ENCODE measurements at regions of chr10 and their contacts with region 1.

Region 1: GRCh38 chr10:70355051-70356021 is 27.1 kb downstream of the LRRC20 start:
- DNase-seq: no peak
- ATAC-seq: no peak
- H3K4me3 ChIP-seq: no peak overlapping the region
- H3K27ac ChIP-seq: peak overlapping the region; percentile 90
- H3K4me1 ChIP-seq: peaks cover 84% of the 10 kb centered on the region
- H3K27me3 ChIP-seq: no peaks in the 10 kb centered on the region
- CTCF ChIP-seq: no peak
- EP300 ChIP-seq: no peak
- POLR2A ChIP-seq: no peak
- RAD21 ChIP-seq: no peak

Region 2: GRCh38 chr10:70197235-70197945 is 157.9 kb before region 1 on chr10:
- CTCF ChIA-PET with region 1: no interaction called
- POLR2A ChIA-PET with region 1: no interaction called
- in situ Hi-C with region 1: no loop called
- intact Hi-C with region 1: no loop called
- DNase-seq: no peak
- ATAC-seq: no peak
- H3K4me3 ChIP-seq: no peak overlapping the region
- H3K27ac ChIP-seq: no peak overlapping the region
- H3K4me1 ChIP-seq: peaks cover 9% of the 10 kb centered on the region
- H3K27me3 ChIP-seq: no peaks in the 10 kb centered on the region
- CTCF ChIP-seq: no peak
- EP300 ChIP-seq: no peak
- POLR2A ChIP-seq: no peak
- RAD21 ChIP-seq: no peak

Region 3: DNA sequence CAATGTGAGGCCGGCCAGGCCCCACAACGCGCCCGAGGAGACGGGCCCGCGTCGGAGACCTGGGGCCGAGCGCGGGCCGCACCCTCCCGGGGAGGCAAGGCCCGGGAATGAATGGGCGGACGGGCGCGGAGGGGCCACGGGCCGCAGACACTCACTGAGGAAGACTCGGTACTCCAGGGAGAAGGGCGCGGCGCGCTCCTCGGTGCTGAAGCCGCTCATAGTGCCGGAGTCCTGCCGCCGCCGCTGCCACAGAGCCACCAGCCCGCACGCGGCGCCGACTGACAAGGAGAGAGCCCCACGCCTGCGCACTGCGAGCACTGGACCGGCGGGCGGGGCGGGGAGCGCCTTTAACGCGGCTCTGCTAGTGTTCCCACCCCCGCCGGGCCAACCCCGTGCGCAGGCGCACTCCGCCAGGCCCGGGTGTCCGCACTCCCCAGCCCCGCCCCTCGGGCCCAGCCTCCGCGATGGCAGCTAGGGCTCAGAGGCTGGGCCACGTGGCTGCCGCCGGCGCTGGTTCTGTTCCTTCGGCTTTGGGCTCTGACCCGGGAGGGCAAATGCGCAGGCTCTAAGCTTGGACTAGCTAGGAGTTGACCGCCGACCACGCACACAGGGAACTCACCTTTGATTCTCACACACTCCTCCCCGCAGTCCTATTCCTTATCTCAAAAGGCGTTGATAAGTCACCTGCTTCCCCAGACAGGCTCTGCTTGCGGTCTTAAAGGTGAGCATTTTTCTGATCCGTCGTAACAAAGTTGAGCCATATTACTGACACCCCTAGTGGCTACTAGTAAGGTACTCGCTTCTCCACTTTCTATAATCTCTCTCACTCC is 122.0 kb before region 1 on chr10 and contains the start of gene PPA1:
- CTCF ChIA-PET with region 1: no interaction called
- POLR2A ChIA-PET with region 1: interaction called, 11 read pairs
- in situ Hi-C with region 1: no loop called
- intact Hi-C with region 1: no loop called
- DNase-seq: peak; percentile 92
- ATAC-seq: peak; percentile 89
- H3K4me3 ChIP-seq: peak within 1 kb of the TSS; percentile 82 to 93 (median 86)
- H3K27ac ChIP-seq: peak within 1 kb of the TSS; percentile 92
- H3K4me1 ChIP-seq: peaks cover 68% of the 10 kb centered on the region
- H3K27me3 ChIP-seq: no peaks in the 10 kb centered on the region; a peak in 1 of 5 replicates
- CTCF ChIP-seq: peak; percentile 38; the same call in 1 of the 2 replicates
- EP300 ChIP-seq: peak in 1 of 2 experiments; percentile 42; a peak in 1 of 4 replicates
- POLR2A ChIP-seq: peak; percentile 89 to 97
- RAD21 ChIP-seq: peak; percentile 40; the same call in 1 of the 2 replicates
- total RNA-seq, gene PPA1: 250 and 371 TPM in 2 replicates

Region 4: GRCh38 chr10:70272925-70273316 is 82.4 kb before region 1 on chr10:
- CTCF ChIA-PET with region 1: no interaction called
- POLR2A ChIA-PET with region 1: no interaction called
- in situ Hi-C with region 1: loop called (anchors 5 kb)
- intact Hi-C with region 1: no loop called
- DNase-seq: no peak
- ATAC-seq: peak; percentile 70
- H3K4me3 ChIP-seq: no peak overlapping the region
- H3K27ac ChIP-seq: no peak overlapping the region
- H3K4me1 ChIP-seq: peaks cover 7% of the 10 kb centered on the region
- H3K27me3 ChIP-seq: peaks cover 0 to 18% of the 10 kb centered on the region in 2 experiments; a peak in 1 of 5 replicates
- CTCF ChIP-seq: peak; percentile 25; the same call in 1 of the 2 replicates
- EP300 ChIP-seq: no peak
- POLR2A ChIP-seq: no peak
- RAD21 ChIP-seq: no peak

Region 5: GRCh38 chr10:70324339-70324861 is 30.9 kb before region 1 on chr10:
- CTCF ChIA-PET with region 1: no interaction called
- POLR2A ChIA-PET with region 1: interaction called, 23 read pairs
- in situ Hi-C with region 1: no loop called
- intact Hi-C with region 1: no loop called
- DNase-seq: peak; percentile 46
- ATAC-seq: peak; percentile 72
- H3K4me3 ChIP-seq: peak overlapping the region; percentile 70 to 92 (median 71)
- H3K27ac ChIP-seq: peak overlapping the region; percentile 77
- H3K4me1 ChIP-seq: peaks cover 62% of the 10 kb centered on the region
- H3K27me3 ChIP-seq: no peaks in the 10 kb centered on the region; a peak in 1 of 5 replicates
- CTCF ChIP-seq: no peak
- EP300 ChIP-seq: no peak
- POLR2A ChIP-seq: no peak; a peak in 1 of 4 replicates
- RAD21 ChIP-seq: no peak